Naive thymus-derived CD4-positive, alpha-beta T cell (primary cell): ENCODE measurements at regions of chr3 and their contacts with region 1.

Region 1: DNA sequence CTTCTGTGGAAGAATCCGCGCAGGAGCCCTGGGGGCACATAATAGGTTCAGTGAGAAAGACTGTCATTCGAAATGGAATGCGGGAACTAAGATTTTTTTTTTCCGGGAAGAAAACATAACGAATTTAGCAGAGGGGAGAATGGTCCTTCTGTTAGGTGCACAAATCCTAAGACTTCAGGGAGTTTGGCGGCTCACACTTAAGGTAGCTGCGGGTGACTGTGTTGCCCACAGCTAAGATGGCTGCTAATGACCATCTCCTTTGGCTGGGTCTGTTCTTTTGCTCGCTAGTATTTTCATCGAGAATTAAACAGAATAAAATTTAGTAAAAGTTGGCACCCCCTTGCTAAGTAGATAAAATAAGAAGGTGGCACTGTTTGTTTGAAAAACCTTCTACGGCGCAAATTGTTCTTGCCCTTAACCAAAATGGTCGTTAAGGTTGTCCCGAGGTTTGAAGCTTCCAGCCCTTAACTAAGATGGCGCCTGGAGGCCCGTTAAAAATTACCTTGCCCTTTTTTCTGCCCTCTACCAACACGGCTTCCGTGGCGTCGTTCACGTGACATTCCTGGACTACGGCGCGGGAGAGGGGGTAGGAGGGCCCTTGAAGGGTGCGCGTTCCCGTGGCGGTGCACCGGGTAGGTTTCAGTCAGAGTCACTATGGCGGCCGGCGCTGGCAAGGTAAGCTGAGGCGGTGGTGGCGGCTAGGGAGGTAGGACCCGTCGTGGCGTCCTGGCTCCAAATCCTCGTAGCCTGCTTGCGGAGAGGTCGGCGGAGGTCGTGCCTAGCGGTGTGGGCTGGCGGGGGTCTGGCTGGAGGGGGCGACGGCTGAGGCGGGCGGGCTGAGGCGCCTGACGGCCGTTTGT is at the start of gene SLMAP:
- DNase-seq: peak; percentile 84 to 97 (median 95)
- ATAC-seq: peak; percentile 98
- H3K4me3 ChIP-seq: peak within 1 kb of the TSS; percentile 80
- H3K4me3 Mint-ChIP-seq: peak within 1 kb of the TSS; percentile 92 to 98 (median 97)
- H3K27ac ChIP-seq: peak within 1 kb of the TSS; percentile 84
- H3K27ac Mint-ChIP-seq: peak within 1 kb of the TSS; percentile 88 to 96 (median 92)
- H3K4me1 ChIP-seq: peaks cover 23 to 29% of the 10 kb centered on the region in 2 donors
- H3K4me1 Mint-ChIP-seq: peaks cover 17 to 45% (median 41%) of the 10 kb centered on the region in 7 donors
- H3K27me3 ChIP-seq: no peaks in the 10 kb centered on the region
- H3K27me3 Mint-ChIP-seq: peaks cover 0 to 8% (median 0%) of the 10 kb centered on the region in 5 donors
- total RNA-seq, gene SLMAP: 54.6 to 77.1 (median 66.6) TPM

Region 2: DNA sequence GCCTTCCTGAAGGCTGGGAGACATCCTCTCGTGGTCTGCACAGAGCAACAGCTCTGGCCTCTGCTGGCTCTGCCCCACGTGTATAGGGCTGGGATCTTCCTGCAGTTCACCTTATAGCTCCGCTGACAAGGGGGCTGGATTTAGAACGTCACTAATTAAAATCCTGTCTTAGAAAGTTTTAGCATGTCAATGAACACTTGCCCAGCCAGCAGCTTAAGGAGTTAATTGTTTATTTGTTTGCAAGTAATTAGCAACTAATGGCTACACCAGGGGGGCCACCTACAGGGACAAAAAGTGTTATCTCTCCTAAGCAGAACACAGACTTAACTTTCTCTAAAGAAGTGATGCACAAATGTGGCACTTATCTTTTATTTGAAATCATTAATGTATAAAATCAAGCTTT is 556.0 kb before region 1 on chr3 and contains the start of gene HESX1:
- CTCF ChIA-PET with region 1: no interaction called
- POLR2A ChIA-PET with region 1: no interaction called
- intact Hi-C with region 1: no loop called
- DNase-seq: no peak
- ATAC-seq: no peak
- H3K4me3 ChIP-seq: no peak within 1 kb of the TSS
- H3K4me3 Mint-ChIP-seq: no peak within 1 kb of the TSS
- H3K27ac ChIP-seq: no peak within 1 kb of the TSS
- H3K27ac Mint-ChIP-seq: peak within 1 kb of the TSS in 1 of 9 donors; percentile 41
- H3K4me1 ChIP-seq: no peaks in the 10 kb centered on the region
- H3K4me1 Mint-ChIP-seq: peaks cover 0 to 5% (median 0%) of the 10 kb centered on the region in 7 donors
- H3K27me3 ChIP-seq: no peaks in the 10 kb centered on the region
- H3K27me3 Mint-ChIP-seq: peaks cover 9 to 20% (median 12%) of the 10 kb centered on the region in 5 donors
- total RNA-seq, gene HESX1: not detected

Region 3: GRCh38 chr3:57227204-57227929 is 528.5 kb before region 1 on chr3 and contains the start of gene APPL1:
- CTCF ChIA-PET with region 1: no interaction called
- POLR2A ChIA-PET with region 1: no interaction called
- intact Hi-C with region 1: loop called (anchors 5 kb)
- DNase-seq: peak; percentile 76 to 97 (median 82)
- ATAC-seq: peak; percentile 96
- H3K4me3 ChIP-seq: peak within 1 kb of the TSS; percentile 88
- H3K4me3 Mint-ChIP-seq: peak within 1 kb of the TSS; percentile 89 to 95 (median 93)
- H3K27ac ChIP-seq: peak within 1 kb of the TSS; percentile 71
- H3K27ac Mint-ChIP-seq: peak within 1 kb of the TSS; percentile 72 to 90 (median 86)
- H3K4me1 ChIP-seq: peaks cover 9 to 12% of the 10 kb centered on the region in 2 donors
- H3K4me1 Mint-ChIP-seq: peaks cover 17 to 38% (median 29%) of the 10 kb centered on the region in 7 donors
- H3K27me3 ChIP-seq: no peaks in the 10 kb centered on the region
- H3K27me3 Mint-ChIP-seq: peaks cover 0 to 5% (median 0%) of the 10 kb centered on the region in 5 donors
- total RNA-seq, gene APPL1: 25.4 to 42.1 (median 29.2) TPM

Region 4: GRCh38 chr3:57597122-57597923 is 158.6 kb before region 1 on chr3 and contains the start of gene ARF4:
- CTCF ChIA-PET with region 1: interaction called, 3 read pairs
- POLR2A ChIA-PET with region 1: interaction called, 24 read pairs
- intact Hi-C with region 1: loop called (anchors 1 kb)
- DNase-seq: peak; percentile 99 to 100 (median 100)
- ATAC-seq: peak; percentile 93
- H3K4me3 ChIP-seq: peak within 1 kb of the TSS; percentile 86
- H3K4me3 Mint-ChIP-seq: peak within 1 kb of the TSS; percentile 91 to 99 (median 98)
- H3K27ac ChIP-seq: peak within 1 kb of the TSS; percentile 94
- H3K27ac Mint-ChIP-seq: peak within 1 kb of the TSS; percentile 95 to 100 (median 99)
- H3K4me1 ChIP-seq: peaks cover 29 to 30% of the 10 kb centered on the region in 2 donors
- H3K4me1 Mint-ChIP-seq: peaks cover 33 to 64% (median 51%) of the 10 kb centered on the region in 7 donors
- H3K27me3 ChIP-seq: no peaks in the 10 kb centered on the region
- H3K27me3 Mint-ChIP-seq: no peaks in the 10 kb centered on the region
- total RNA-seq, gene ARF4: 50.9 to 85.5 (median 57.5) TPM

Region 5: DNA sequence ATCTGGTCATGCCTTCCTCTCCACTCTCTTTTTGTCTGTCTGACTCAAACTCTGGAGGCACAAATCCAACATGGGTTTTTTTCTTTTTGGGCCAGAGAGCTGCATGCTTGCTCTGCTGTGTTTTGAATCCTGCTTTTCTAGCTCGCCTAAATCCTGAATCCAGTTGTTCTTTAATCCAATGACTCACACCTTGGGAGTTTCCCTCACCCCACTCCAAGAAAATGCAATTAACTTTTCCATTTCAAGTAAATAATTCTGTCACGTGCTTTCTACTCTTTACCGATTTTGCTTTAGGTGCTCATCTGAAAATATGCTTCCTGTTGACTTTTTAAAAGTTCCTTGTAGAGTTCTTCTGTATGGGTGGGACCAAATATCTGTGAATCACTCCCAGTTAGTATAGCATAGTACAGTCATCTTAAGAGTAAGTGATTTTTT is 47.8 kb after region 1 on chr3:
- CTCF ChIA-PET with region 1: no interaction called
- POLR2A ChIA-PET with region 1: interaction called, 4 read pairs
- intact Hi-C with region 1: loop called (anchors 1 to 5 kb)
- DNase-seq: peak in 5 of 9 donors; percentile 13 to 35 (median 28)
- ATAC-seq: peak; percentile 71
- H3K4me3 ChIP-seq: peak overlapping the region; percentile 19
- H3K4me3 Mint-ChIP-seq: peak overlapping the region; percentile 13 to 88 (median 79)
- H3K27ac ChIP-seq: peak overlapping the region; percentile 12
- H3K27ac Mint-ChIP-seq: peak overlapping the region; percentile 34 to 94 (median 89)
- H3K4me1 ChIP-seq: peaks cover 8 to 20% of the 10 kb centered on the region in 2 donors
- H3K4me1 Mint-ChIP-seq: peaks cover 45 to 90% (median 77%) of the 10 kb centered on the region in 7 donors
- H3K27me3 ChIP-seq: no peaks in the 10 kb centered on the region
- H3K27me3 Mint-ChIP-seq: no peaks in the 10 kb centered on the region

Region 6: GRCh38 chr3:57951066-57951882 is 195.4 kb after region 1 on chr3:
- CTCF ChIA-PET with region 1: no interaction called
- POLR2A ChIA-PET with region 1: no interaction called
- intact Hi-C with region 1: no loop called
- DNase-seq: no peak
- ATAC-seq: peak; percentile 80
- H3K4me3 ChIP-seq: no peak overlapping the region
- H3K4me3 Mint-ChIP-seq: no peak overlapping the region
- H3K27ac ChIP-seq: no peak overlapping the region
- H3K27ac Mint-ChIP-seq: no peak overlapping the region
- H3K4me1 ChIP-seq: no peaks in the 10 kb centered on the region
- H3K4me1 Mint-ChIP-seq: peaks cover 0 to 2% (median 0%) of the 10 kb centered on the region in 7 donors
- H3K27me3 ChIP-seq: no peaks in the 10 kb centered on the region
- H3K27me3 Mint-ChIP-seq: peaks cover 0 to 12% (median 4%) of the 10 kb centered on the region in 5 donors

Region 7: DNA sequence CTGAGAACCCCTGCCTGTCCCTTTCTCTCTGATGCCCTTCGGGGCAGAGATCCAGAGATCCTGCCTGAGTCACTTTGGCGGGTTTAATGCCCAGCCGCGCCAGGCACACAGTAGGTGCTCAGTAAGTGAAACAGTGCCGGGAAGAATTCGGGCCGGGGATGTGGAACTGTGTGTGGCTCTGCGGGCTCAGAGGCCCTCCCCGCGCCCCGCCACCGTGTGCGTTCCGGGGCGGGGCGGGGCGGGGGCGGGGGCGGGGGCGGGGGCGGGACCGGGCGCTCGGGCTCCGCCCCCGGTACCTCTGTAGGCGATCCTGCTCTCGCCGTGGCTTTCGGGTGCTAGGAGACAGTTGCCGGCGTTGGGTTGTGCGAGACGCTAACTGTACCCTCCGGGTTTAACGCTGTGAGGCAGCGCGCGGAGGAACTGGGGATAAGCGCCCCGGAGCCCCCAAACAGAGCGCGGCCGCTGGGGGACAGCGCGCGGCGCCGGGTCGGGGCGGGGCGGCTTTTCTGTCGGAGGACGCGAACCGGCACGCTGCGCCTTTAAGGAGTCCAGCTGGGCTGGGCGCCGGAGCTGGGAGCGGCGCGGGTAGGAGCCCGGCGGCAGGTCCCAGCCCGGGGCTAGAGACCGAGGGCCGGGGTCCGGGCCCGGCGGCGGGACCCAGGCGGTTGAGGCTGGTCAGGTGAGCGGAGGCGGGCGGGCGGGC is 481.5 kb after region 1 on chr3 and contains the start of gene ABHD6:
- CTCF ChIA-PET with region 1: no interaction called
- POLR2A ChIA-PET with region 1: no interaction called
- intact Hi-C with region 1: loop called in 1 of 2 experiments (anchors 10 kb)
- DNase-seq: peak; percentile 58 to 95 (median 86)
- ATAC-seq: peak; percentile 91
- H3K4me3 ChIP-seq: peak within 1 kb of the TSS; percentile 86
- H3K4me3 Mint-ChIP-seq: peak within 1 kb of the TSS; percentile 84 to 98 (median 92)
- H3K27ac ChIP-seq: peak within 1 kb of the TSS; percentile 72
- H3K27ac Mint-ChIP-seq: peak within 1 kb of the TSS; percentile 50 to 87 (median 81)
- H3K4me1 ChIP-seq: peaks cover 6 to 12% of the 10 kb centered on the region in 2 donors
- H3K4me1 Mint-ChIP-seq: peaks cover 9 to 18% (median 13%) of the 10 kb centered on the region in 7 donors
- H3K27me3 ChIP-seq: no peaks in the 10 kb centered on the region
- H3K27me3 Mint-ChIP-seq: peaks cover 0 to 29% (median 13%) of the 10 kb centered on the region in 5 donors
- total RNA-seq, gene ABHD6: 3.1 to 7.3 (median 6.6) TPM